Calu3 (cell line): ENCODE measurements at regions of chr22 and their contacts with region 1.

Region 1: DNA sequence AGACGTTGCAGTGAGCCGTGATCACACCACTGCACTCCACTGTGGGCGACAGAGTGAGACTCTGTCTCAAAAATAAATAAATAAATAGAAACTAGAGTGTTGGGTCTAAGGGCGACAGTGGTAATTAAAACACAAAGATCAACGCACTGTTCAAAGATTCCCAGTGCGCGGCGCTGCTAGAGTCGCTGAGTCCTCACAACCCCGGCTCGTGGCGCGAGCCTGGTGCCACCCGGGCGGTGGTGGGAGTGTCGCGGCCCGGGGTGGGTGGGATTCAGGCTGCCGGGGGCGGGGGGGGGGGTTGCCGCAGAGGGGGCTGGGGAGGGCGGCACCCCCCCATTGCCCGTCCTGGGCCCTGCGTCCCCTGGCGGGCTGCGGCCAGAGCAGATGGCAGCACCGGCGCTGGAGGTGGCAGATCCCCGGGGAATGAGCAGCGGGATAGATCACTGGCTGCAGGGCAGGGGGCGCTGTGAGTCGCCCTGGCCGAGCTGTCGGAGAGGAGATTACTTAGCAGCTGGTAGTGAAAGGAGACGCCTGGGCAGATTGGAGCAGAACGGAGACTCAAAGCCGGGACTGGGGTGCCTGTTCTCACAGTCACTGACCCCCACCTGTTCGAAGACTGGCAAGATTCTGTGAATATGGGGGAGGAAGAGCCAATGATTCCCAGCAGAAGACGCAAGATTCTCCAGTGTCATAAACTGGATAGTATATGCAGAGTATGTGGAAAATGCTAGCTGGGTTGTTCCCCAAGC is 30.2 kb upstream of the APOBEC3A start:
- DNase-seq: peak; percentile 91
- H3K4me3 Mint-ChIP-seq: peak overlapping the region; percentile 55
- H3K27ac Mint-ChIP-seq: peak overlapping the region; percentile 33
- H3K4me1 Mint-ChIP-seq: peaks cover 40% of the 10 kb centered on the region
- H3K27me3 Mint-ChIP-seq: no peaks in the 10 kb centered on the region
- CTCF ChIP-seq: peak; percentile 96

Region 2: DNA sequence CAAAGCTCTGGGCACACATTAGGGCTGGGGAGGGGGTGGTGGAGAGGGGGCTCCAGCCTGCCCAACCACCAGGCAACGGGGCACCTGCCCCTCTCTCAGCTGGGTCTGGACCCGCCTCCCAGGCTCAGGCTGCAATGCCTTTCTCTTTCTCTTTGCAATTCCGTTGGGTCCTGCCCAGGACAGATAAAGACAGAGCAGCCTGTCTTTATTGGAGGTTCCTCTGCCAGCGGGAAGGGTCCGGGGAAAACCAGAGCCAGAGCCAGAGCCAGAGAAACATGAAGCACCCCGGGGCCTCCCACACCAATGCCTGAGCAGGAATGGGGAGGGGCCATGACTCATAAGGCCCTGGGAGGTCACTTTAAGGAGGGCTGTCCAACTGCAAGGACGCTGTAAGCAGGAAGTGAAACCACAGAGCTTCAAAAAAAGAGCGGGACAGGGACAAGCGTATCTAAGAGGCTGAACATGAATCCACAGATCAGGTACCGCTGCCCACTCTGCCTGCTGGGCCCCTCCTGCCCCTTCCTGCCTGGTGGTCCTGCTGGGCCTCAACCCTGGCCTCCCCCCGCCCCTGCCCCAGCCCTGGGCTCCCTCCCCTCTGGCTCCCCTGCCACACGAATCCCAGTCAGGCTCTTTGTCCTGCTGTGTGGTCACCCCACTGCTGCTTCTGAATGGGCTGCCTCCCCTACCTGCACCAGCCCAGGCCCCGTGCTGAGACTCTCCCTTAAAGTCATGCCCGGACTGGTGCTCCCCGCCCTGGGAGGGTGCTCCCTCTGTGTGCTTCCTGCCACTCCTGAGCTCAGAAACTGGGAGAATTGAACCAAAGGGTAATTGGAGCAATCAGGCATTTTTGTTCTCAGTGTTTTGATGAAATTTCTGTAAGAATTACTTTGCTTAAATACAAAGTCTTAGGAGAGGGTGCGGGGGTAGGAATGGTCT is 55.1 kb after region 1 on chr22 and contains the start of gene APOBEC3B:
- CTCF ChIA-PET with region 1: interaction called, 8 read pairs
- intact Hi-C with region 1: loop called (anchors 5 kb)
- DNase-seq: peak; percentile 90
- H3K4me3 Mint-ChIP-seq: peak within 1 kb of the TSS; percentile 60
- H3K27ac Mint-ChIP-seq: peak within 1 kb of the TSS; percentile 89
- H3K4me1 Mint-ChIP-seq: peaks cover 10% of the 10 kb centered on the region
- H3K27me3 Mint-ChIP-seq: no peaks in the 10 kb centered on the region
- CTCF ChIP-seq: no peak
- total RNA-seq, gene APOBEC3B: 43.2 and 43.3 TPM in 2 replicates

Region 3: DNA sequence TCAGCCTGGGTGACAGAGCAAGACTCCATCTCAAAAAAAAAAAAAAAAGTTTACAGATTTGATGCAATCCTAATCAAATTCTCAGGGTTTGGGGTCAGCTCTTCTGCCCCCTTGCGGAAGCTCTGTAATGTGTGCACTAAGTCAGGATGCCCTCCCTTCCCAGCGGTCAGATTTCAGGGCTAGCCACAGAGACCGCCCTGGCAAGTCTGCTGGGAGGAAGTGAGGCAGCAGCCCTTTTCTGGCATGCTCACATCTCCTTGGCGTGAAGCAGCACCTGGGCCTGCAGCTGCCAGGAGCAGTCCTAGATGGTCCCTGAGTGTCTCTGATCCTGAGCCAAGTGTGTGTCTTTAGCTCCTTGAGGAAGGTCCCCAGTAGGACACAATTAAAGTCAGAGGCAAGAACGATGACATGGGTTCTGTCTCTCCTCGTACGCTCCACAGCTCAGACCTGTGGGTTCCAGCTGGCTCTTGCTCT is 76.0 kb after region 1 on chr22:
- CTCF ChIA-PET with region 1: interaction called, 10 read pairs
- intact Hi-C with region 1: loop called (anchors 1 kb)
- DNase-seq: peak; percentile 85
- H3K4me3 Mint-ChIP-seq: no peak overlapping the region
- H3K27ac Mint-ChIP-seq: no peak overlapping the region
- H3K4me1 Mint-ChIP-seq: no peaks in the 10 kb centered on the region
- H3K27me3 Mint-ChIP-seq: no peaks in the 10 kb centered on the region
- CTCF ChIP-seq: peak; percentile 76

Region 4: DNA sequence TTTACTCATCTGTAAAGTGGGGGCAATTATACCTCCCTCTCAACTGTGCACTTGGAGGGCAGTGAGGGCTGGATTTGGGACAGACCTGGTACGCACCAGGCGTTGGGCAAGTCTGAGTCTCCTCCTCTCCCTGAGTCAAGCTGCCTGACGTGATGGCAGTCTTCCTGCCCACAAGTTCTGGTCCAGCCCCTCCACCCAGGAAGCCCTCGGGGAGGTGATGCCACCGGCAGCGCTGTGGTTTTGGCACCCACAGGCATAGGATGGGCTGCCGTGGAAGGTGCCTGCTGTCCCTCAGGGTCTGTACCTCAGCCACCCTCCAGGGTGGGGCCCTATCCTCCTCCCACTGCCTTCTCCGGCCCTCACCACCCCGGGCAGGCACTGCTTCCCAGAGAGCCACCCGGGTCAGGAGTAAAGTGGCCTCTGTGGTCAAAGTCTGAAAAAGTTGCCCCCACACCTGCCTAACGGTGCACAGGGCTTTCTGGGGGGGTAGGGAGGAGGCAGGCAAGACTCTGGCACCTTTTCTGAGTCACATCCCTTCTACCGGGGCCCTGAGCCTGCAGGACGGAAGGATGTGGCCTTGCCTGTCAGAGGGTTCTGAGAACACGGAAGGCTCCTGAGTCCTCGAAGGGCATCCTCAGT is 163.3 kb after region 1 on chr22:
- CTCF ChIA-PET with region 1: no interaction called
- intact Hi-C with region 1: no loop called
- DNase-seq: no peak
- H3K4me3 Mint-ChIP-seq: no peak overlapping the region
- H3K27ac Mint-ChIP-seq: no peak overlapping the region
- H3K4me1 Mint-ChIP-seq: no peaks in the 10 kb centered on the region
- H3K27me3 Mint-ChIP-seq: peaks cover 20% of the 10 kb centered on the region
- CTCF ChIP-seq: no peak